ENCODE measurements at regions of chr9 and their contacts with region 1.

Region 1: GRCh38 chr9:129460323-129461261 is 160.3 kb downstream of the C9orf50 start:
- DNase-seq: peak; percentile 96 to 97
- H3K4me3 ChIP-seq: peak overlapping the region; percentile 33 to 66 (median 50)
- H3K27ac ChIP-seq: peak overlapping the region; percentile 99 to 100
- H3K4me1 ChIP-seq: peaks cover 29 to 35% of the 10 kb centered on the region in 2 donors
- H3K27me3 ChIP-seq: no peaks in the 10 kb centered on the region
- CTCF ChIP-seq: peak in 1 of 3 donors; percentile 37
- POLR2A ChIP-seq: peak; percentile 20

Region 2: GRCh38 chr9:129333953-129334724 is 126.5 kb before region 1 on chr9:
- intact Hi-C with region 1: loop called (anchors 10 kb)
- DNase-seq: peak; percentile 92 to 94
- H3K4me3 ChIP-seq: peak overlapping the region in 2 of 3 donors; percentile 28 to 38
- H3K27ac ChIP-seq: peak overlapping the region; percentile 96 to 98
- H3K4me1 ChIP-seq: peaks cover 23 to 27% of the 10 kb centered on the region in 2 donors
- H3K27me3 ChIP-seq: no peaks in the 10 kb centered on the region
- CTCF ChIP-seq: peak in 1 of 3 donors; percentile 14
- POLR2A ChIP-seq: no peak

Region 3: DNA sequence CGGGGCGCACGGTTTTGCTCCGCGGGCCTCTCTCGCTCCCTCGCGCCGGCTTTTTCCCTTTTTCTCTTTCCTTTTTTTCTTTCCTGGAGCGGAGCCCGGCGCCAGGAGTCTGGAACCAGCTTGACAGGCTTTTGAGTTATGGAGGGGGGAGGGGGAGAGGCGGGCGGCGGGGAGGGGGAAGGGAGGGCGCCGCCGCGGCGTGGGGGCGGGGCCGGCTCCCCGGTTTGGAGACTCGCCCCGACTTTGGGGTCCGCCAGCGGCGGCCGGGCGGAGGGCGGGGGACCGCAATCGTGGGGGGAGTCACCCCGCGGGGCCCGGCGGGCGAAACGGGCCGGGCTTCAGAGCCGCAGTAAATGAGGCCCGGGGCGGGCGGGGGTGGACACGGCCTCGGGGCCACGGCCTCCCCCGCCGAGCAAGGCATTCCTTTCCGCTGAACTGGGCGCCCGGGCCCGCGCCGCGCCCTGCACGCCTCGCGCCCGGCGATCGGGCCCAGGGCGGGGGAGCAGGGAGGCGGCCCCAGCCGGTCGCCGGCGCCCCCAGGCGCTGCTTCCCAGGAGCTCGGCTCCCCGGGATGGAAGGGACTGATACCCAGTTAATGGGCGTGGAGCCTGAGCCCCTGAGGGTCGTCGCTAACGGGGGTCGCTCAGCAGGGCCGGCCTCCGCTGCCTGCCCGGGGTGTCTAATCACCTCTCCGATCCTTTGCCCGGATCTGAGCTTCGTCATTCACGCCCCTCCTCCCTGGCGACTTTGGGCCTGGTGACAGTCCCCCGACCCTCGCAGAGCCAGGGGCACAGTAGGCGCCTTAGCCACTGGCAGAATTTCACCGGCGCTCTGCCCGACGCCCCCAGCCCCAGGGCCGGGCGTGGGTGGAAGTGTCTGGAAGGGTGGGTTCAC is 22.2 kb after region 1 on chr9:
- intact Hi-C with region 1: loop called (anchors 1 kb)
- DNase-seq: peak; percentile 87 to 92
- H3K4me3 ChIP-seq: peak overlapping the region; percentile 52 to 76 (median 66)
- H3K27ac ChIP-seq: peak overlapping the region; percentile 100
- H3K4me1 ChIP-seq: peaks cover 20 to 40% of the 10 kb centered on the region in 2 donors
- H3K27me3 ChIP-seq: no peaks in the 10 kb centered on the region
- CTCF ChIP-seq: no peak
- POLR2A ChIP-seq: no peak